GM12878 (cell line): ENCODE measurements at regions of chr12 and their contacts with region 1.

Region 1: GRCh38 chr12:51980051-51980808 is 26.5 kb upstream of the TAMALIN start:
- DNase-seq: no peak
- ATAC-seq: peak; percentile 98
- H3K4me3 ChIP-seq: no peak overlapping the region
- H3K27ac ChIP-seq: no peak overlapping the region
- H3K4me1 ChIP-seq: no peaks in the 10 kb centered on the region; the same call in 1 of the 2 replicates
- H3K27me3 ChIP-seq: peaks cover 0 to 11% of the 10 kb centered on the region in 2 experiments; a peak in 2 of 4 replicates
- CTCF ChIP-seq: peak; percentile 95 to 97 (median 96)
- EP300 ChIP-seq: no peak
- POLR2A ChIP-seq: no peak
- RAD21 ChIP-seq: peak; percentile 90

Region 2: GRCh38 chr12:51678086-51678724 is 302.0 kb before region 1 on chr12:
- CTCF ChIA-PET with region 1: no interaction called
- POLR2A ChIA-PET with region 1: no interaction called
- RAD21 ChIA-PET with region 1: no interaction called
- SMC1A ChIA-PET with region 1: no interaction called
- in situ Hi-C with region 1: no loop called
- intact Hi-C with region 1: no loop called
- DNase-seq: no peak
- ATAC-seq: peak; percentile 83
- H3K4me3 ChIP-seq: no peak overlapping the region
- H3K27ac ChIP-seq: no peak overlapping the region
- H3K4me1 ChIP-seq: no peaks in the 10 kb centered on the region
- H3K27me3 ChIP-seq: no peaks in the 10 kb centered on the region; a peak in 1 of 4 replicates
- CTCF ChIP-seq: peak; percentile 60 to 75 (median 71)
- EP300 ChIP-seq: no peak
- POLR2A ChIP-seq: no peak
- RAD21 ChIP-seq: peak; percentile 45

Region 3: DNA sequence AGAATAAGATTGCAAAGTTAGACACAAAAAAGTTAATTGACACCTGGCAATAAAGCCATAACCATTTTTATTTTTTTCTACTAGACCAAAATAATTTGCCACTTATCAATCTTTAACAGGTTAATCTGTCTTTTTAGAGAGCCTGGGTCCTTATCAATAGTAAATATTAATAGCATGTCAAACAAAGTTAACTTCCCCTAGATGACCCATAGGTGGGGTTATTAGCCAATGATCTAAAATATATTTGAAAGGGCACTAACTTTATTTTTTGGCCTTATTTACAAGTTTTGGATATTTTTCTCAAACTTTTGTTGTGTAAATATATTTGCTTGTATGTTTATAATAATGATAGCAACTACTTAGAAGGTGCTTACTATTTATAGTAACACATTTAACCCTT is 88.4 kb before region 1 on chr12:
- CTCF ChIA-PET with region 1: interaction called, 10 read pairs
- POLR2A ChIA-PET with region 1: interaction called, 3 read pairs
- RAD21 ChIA-PET with region 1: interaction called, 3 read pairs
- SMC1A ChIA-PET with region 1: interaction called, 3 read pairs
- in situ Hi-C with region 1: no loop called
- intact Hi-C with region 1: loop called (anchors 2 kb)
- DNase-seq: no peak
- ATAC-seq: peak; percentile 46; the same call in 1 of the 3 replicates
- H3K4me3 ChIP-seq: no peak overlapping the region
- H3K27ac ChIP-seq: no peak overlapping the region
- H3K4me1 ChIP-seq: no peaks in the 10 kb centered on the region
- H3K27me3 ChIP-seq: 0 out of 4 replicates have a peak, but pooled peaks cover 0 to under 1% of the 10 kb centered on the region in 2 experiments
- CTCF ChIP-seq: peak in 2 of 3 experiments; percentile 13 to 40; a peak in 2 of 6 replicates
- EP300 ChIP-seq: no peak
- POLR2A ChIP-seq: no peak
- RAD21 ChIP-seq: peak; percentile 36; the same call in 1 of the 2 replicates

Region 4: DNA sequence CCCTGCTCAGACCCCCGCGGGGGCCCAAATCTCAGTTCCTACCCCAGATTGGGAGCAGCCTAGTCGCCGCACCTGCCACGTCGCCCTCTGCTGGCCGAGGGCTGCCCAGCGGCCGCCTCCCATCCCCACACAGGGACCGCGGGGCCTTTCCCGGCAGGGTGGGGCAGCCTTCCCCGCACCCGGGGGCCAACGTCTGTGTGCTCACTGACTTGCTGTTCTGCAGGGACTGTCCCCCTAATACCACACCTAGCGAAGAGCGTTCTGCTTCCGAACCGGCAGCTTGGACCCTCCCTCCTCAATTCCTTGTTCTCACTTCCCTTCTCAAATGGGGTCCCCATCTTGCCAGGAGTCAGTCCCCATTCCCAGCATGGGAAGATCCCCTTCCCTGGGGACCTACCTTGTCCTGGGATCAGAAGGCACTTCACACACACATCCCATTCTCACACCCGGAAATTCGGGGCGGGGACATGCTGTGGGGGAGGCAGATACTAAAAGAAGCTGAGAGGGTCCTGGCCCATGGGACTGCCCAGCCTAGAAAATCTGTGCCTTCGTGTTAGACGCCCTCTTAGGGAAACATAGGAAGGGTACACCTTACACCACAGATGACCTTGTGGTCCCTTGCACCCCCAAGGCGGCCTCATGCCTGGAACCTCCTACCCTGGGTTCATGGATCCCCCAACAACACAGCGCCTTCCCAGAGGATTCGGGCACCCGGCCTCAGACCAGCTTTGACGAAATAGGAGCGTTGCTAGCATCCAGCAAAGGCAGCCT is 56.5 kb before region 1 on chr12:
- CTCF ChIA-PET with region 1: interaction called, 19 read pairs
- POLR2A ChIA-PET with region 1: no interaction called
- RAD21 ChIA-PET with region 1: interaction called, 3 read pairs
- SMC1A ChIA-PET with region 1: interaction called, 4 read pairs
- in situ Hi-C with region 1: no loop called
- intact Hi-C with region 1: loop called (anchors 1 kb)
- DNase-seq: no peak
- ATAC-seq: peak; percentile 84
- H3K4me3 ChIP-seq: no peak overlapping the region
- H3K27ac ChIP-seq: no peak overlapping the region
- H3K4me1 ChIP-seq: peaks cover 35% of the 10 kb centered on the region
- H3K27me3 ChIP-seq: no peaks in the 10 kb centered on the region
- CTCF ChIP-seq: peak; percentile 71 to 86 (median 78)
- EP300 ChIP-seq: no peak
- POLR2A ChIP-seq: no peak
- RAD21 ChIP-seq: 0 out of 2 replicates have a peak, but pooled peaks have one; percentile 8

Region 5: DNA sequence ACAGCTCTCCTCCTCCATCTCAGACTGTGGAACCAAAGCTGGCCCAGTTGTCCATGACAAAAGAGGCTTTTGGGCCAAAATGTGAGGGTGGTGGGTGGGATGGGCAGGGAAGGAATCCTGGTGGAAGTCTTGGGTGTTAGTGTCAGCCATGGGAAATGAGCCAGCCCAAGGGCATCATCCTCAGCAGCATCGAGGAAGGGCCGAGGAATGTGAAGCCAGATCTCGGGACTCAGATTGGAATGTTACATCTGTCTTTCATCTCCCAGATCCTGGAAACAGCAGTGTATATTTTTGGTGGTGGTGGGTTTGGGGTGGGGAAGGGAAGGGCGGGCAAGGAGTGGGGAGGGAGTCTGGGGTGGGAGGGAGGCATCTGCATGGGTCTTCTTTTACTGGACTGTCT is 14.7 kb after region 1 on chr12:
- CTCF ChIA-PET with region 1: interaction called, 10 read pairs
- POLR2A ChIA-PET with region 1: no interaction called
- RAD21 ChIA-PET with region 1: no interaction called
- SMC1A ChIA-PET with region 1: no interaction called
- in situ Hi-C with region 1: no loop called
- intact Hi-C with region 1: no loop called
- DNase-seq: no peak
- ATAC-seq: no peak
- H3K4me3 ChIP-seq: no peak overlapping the region
- H3K27ac ChIP-seq: no peak overlapping the region
- H3K4me1 ChIP-seq: no peaks in the 10 kb centered on the region
- H3K27me3 ChIP-seq: no peaks in the 10 kb centered on the region; a peak in 1 of 4 replicates
- CTCF ChIP-seq: no peak
- EP300 ChIP-seq: no peak
- POLR2A ChIP-seq: no peak
- RAD21 ChIP-seq: no peak